WTC11 (cell line): ENCODE measurements at regions of chr12 and their contacts with region 1.

Region 1: DNA sequence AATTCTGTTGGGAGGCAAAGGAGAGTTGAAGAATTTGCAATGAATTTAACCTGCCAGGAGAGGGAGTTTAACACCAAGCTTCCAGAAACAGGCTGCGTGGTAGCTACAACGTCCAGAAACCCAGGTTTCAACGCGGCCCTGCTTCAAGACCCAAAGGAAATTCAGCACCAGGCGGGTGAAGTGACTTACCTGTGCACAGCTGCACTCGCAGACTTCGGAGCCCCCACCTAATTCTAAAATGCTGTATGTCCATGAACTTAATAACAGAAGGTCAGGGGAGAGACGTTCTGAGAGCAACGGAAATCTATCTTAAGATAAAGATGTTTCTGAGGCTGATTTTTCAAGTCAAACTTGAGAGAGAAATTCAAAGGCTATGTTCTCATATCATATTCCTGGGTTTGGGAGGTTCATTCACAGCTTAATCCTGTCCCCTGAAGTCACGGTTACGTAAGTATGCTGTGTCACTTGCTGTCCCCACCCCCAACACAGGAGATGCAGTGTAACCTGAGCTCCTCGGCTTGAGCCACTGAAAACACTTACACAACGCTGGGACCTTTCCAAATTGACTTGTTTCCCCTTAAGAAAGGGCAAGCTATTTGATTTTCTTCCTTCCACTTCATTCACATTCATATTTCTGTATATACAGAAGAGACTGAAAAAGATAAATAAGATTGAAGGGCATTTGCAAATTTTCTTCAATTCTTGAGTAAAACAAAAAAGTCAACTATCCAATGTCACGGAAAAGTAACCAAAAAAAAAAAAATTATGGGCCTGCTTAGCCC is 22.7 kb downstream of the CLIP1 start:
- DNase-seq: peak; percentile 56
- ATAC-seq: peak; percentile 85
- H3K4me3 Mint-ChIP-seq: peak overlapping the region; percentile 68
- H3K27ac Mint-ChIP-seq: peak overlapping the region; percentile 91
- H3K4me1 Mint-ChIP-seq: peaks cover 17% of the 10 kb centered on the region
- H3K27me3 Mint-ChIP-seq: no peaks in the 10 kb centered on the region
- CTCF ChIP-seq: no peak

Region 2: DNA sequence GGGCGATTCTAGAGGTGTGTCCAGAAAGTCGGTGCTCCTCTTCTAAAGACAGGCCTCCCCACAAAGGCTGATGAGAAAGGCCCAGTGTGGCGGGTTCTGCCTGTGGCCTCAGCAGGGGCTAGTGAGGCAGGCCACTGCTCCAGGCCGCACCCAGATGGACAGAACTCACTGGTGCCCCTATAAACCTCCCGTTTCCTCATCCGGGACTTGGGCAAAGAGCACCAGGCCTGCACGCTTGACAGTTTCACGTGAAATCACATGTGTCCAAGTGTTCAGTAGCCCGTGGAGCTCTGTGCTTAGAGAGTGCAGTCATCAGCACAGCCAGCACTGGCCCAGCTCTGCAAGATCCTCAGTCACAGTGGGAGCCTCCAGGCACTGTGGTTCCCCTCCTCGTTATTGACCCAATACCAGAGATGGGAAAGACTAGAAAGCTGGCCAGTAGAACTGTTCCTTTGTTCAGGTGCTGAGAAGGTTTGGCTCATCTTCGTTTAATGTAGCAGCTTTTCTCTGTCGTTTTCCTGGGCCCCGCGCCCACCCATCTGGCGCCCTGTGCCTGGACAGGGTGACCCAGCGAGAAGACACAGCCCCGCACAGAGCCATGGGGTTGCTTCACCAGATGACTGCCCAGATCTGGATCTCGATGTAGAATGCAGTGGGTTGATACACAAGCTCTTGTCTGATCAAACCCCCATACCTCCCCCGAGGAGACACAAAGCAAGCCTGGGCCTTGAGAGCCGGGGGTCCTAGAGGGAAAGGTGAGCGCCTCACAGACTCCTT is 252.1 kb before region 1 on chr12:
- CTCF ChIA-PET with region 1: no interaction called
- POLR2A ChIA-PET with region 1: no interaction called
- DNase-seq: no peak
- ATAC-seq: no peak
- H3K4me3 Mint-ChIP-seq: no peak overlapping the region
- H3K27ac Mint-ChIP-seq: peak overlapping the region; percentile 28; the same call in 1 of the 2 replicates
- H3K4me1 Mint-ChIP-seq: peaks cover 2% of the 10 kb centered on the region; the same call in 1 of the 2 replicates
- H3K27me3 Mint-ChIP-seq: no peaks in the 10 kb centered on the region; the same call in 1 of the 2 replicates
- CTCF ChIP-seq: no peak

Region 3: DNA sequence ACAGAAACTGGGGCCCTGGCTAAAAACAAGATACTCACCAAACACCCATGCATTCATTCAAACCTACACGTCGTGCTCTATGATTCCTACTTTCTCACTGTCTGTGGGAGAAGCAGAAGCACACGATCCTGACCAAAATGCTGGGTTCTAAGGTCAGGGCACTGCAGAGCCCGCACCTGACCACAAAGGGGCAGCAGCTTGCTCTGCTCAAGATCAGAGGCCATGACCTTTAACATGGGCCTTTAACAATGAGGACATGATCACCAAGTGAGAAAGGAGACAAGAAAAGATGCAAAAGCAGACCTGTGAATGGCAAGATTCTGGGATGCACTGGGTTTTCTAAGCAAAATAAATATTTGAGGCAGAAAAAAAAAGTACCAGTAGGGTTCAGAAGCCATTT is 93.4 kb before region 1 on chr12:
- CTCF ChIA-PET with region 1: interaction called, 10 read pairs
- POLR2A ChIA-PET with region 1: no interaction called
- DNase-seq: peak; percentile 44
- ATAC-seq: peak; percentile 98
- H3K4me3 Mint-ChIP-seq: no peak overlapping the region
- H3K27ac Mint-ChIP-seq: peak overlapping the region; percentile 4; the same call in 1 of the 2 replicates
- H3K4me1 Mint-ChIP-seq: no peaks in the 10 kb centered on the region
- H3K27me3 Mint-ChIP-seq: no peaks in the 10 kb centered on the region
- CTCF ChIP-seq: no peak; the same call in 1 of the 2 replicates

Region 4: DNA sequence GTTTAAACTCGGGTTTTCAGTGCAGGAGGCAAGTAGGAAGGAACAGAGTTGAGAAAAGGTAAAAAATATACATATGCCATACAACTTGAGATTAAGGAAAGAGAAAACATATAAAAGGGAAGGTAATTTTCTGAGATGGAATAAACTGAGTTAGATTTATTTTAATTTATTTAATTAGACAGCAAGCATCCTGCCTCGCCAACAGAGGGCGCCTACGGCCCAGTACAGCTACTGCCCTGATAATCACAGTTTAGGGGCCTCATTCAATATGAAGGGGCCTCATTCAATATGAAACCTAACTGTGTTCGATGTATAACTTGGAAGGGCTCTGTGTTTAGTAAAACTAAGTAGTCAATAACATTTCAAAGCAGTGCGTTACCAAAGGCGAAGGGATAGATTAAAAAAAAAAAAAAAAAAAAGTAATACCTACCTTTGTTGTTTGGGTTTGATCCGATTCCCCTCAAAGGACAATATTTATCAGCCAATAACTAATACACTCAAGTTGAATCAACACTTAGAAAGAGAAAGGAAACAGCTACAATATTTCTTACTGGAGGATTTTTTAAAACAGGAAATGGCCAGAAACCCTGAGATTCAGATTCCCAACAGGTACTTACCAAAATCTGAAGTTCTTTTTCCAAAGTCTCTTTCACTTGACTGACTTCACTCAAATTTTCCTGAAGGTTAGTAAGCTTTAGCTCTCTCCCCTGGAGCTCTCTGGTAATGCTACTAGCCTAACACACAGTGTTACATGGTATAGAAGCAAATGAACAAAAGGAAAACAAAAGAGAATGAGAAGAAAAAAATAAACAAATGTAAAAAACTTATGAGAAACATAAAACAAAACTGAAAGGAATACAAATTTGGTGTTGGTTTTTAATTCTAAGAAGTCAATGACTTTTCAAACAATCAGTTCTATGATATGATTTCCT is 63.5 kb before region 1 on chr12:
- CTCF ChIA-PET with region 1: interaction called, 10 read pairs
- POLR2A ChIA-PET with region 1: no interaction called
- DNase-seq: peak; percentile 54
- ATAC-seq: peak; percentile 53; the same call in 1 of the 2 replicates
- H3K4me3 Mint-ChIP-seq: no peak overlapping the region
- H3K27ac Mint-ChIP-seq: peak overlapping the region; percentile 73; the same call in 1 of the 2 replicates
- H3K4me1 Mint-ChIP-seq: no peaks in the 10 kb centered on the region
- H3K27me3 Mint-ChIP-seq: no peaks in the 10 kb centered on the region
- CTCF ChIP-seq: peak; percentile 75

Region 5: DNA sequence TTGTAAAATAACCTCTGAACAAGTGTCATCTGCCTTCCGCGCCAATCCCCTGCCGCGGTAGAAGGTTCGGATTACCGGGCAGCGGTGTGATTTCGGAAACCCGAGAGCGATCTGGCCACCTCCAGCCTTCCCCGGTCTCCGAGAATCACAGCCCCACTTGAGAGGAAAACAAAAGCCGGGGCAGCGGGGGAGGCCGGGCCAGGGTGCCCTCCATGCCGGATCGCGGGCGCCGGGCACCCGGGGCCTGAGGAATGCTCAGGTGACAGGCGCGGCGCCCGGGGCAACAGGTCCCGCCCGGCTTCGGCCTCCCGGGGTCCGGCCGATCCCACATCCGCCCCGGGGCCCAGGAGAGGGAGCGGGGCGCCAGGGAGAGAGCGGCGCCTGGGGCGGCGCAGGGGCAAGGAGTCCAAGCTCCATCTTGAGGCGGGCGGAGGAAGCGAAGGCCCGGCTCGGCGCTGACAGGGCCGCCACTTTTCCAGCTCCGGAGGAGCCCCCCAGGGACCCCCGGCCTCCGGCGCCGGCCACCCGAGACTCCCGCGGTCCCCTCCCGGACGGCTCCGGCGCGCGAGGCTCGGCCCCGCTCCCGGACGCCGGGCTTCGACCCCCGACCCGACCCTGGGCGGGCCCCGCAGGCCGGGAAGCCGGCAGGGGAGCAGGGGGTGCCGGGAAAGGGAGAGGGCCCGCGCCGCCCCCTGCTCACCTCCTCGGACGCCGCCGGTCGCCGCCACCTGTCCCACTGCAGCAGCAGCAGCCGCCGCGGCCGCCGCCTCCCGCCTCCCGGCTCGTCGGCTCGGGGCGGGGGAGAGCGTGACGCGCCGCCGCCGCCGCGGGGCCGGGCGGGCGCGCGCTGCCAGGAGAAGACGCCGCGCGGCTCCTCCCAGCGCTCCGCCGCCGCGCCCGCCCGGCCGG is 22.3 kb after region 1 on chr12 and contains the start of gene CLIP1:
- CTCF ChIA-PET with region 1: interaction called, 31 read pairs
- POLR2A ChIA-PET with region 1: interaction called, 10 read pairs
- DNase-seq: peak; percentile 70
- ATAC-seq: peak; percentile 75
- H3K4me3 Mint-ChIP-seq: peak within 1 kb of the TSS; percentile 86
- H3K27ac Mint-ChIP-seq: peak within 1 kb of the TSS; percentile 94
- H3K4me1 Mint-ChIP-seq: peaks cover 19% of the 10 kb centered on the region
- H3K27me3 Mint-ChIP-seq: peaks cover 5% of the 10 kb centered on the region
- CTCF ChIP-seq: no peak
- total RNA-seq, gene CLIP1: 21.3 to 24.9 TPM (median 21.5 TPM) in 3 replicates

Region 6: DNA sequence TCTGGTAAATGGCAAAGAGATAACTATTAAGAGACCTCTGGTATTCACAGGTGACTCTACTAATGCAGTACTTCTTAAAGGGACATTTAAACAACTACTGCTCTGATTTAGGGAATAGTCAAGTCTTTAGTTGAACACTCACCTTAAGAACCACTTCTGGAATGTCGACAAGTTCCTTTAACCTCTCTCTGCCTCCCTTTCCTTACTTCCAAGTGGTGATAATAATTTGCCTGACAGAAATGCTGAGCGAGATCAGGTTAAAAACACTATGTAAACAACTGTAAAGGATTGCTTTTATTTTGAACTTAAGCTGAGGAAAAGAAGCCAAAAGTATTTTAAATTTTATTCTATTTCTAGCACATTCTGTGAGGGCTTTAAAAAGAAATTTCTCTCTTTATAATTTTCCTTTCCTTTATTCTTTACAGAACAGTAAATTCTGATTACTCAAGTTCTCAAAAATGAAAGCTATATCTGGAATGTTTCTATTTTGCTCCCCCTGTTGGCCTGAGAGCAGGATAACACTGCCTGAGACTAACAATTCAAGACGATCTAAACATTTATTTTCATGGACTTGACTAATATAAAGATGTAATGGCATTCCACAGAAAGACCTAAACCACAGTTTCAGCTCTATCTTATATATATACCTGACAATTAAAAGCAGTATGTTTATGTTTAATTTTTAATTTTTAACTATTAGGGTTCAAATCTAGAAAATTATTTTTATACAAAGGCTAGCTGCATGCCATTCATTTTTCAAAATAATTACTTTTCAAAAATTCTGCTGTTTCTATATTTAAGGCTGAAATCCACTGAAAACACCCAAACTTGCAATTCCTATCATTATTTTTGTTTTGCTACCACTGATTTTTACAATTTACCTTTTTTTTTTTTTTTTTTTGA is 71.8 kb after region 1 on chr12:
- CTCF ChIA-PET with region 1: interaction called, 126 read pairs
- POLR2A ChIA-PET with region 1: interaction called, 9 read pairs
- DNase-seq: no peak
- ATAC-seq: no peak
- H3K4me3 Mint-ChIP-seq: no peak overlapping the region
- H3K27ac Mint-ChIP-seq: peak overlapping the region; percentile 28; the same call in 1 of the 2 replicates
- H3K4me1 Mint-ChIP-seq: no peaks in the 10 kb centered on the region
- H3K27me3 Mint-ChIP-seq: no peaks in the 10 kb centered on the region
- CTCF ChIP-seq: peak; percentile 46

Region 7: DNA sequence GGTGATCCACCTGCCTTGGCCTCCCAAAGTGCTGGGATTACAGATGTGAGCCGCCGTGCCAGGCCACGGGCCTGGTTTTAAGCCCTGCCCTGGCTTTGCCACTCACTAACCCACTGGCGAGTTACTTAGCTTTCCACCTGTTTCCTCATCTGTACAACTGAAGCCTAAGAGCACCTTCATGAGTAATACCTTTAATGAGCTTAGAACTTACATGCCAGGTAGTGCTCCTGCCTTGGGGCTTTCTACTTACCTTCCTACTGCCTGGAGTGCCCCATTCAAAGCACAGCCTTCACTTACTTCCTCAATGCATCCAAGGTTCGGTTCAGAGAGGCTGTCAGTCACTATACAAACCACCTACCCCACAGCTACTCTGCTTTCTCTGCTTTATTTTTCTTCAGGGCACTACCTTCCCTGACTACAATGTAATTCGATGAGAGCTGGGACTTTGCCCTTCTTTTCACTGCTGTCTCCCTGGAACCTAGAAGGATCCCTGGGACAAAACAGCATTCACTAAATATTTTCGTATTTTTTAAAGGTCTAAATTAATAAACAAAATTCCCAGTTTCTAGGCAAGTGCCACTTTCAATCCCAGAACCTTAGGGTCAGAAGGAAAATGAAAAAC is 87.1 kb after region 1 on chr12:
- CTCF ChIA-PET with region 1: no interaction called
- POLR2A ChIA-PET with region 1: no interaction called
- DNase-seq: no peak
- ATAC-seq: no peak
- H3K4me3 Mint-ChIP-seq: no peak overlapping the region
- H3K27ac Mint-ChIP-seq: no peak overlapping the region
- H3K4me1 Mint-ChIP-seq: no peaks in the 10 kb centered on the region
- H3K27me3 Mint-ChIP-seq: no peaks in the 10 kb centered on the region
- CTCF ChIP-seq: no peak

Region 8: GRCh38 chr12:122500685-122501488 is 101.1 kb after region 1 on chr12 and contains the start of gene ZCCHC8:
- CTCF ChIA-PET with region 1: interaction called, 18 read pairs
- POLR2A ChIA-PET with region 1: interaction called, 19 read pairs
- DNase-seq: peak; percentile 98
- ATAC-seq: peak; percentile 94
- H3K4me3 Mint-ChIP-seq: peak within 1 kb of the TSS; percentile 88
- H3K27ac Mint-ChIP-seq: peak within 1 kb of the TSS; percentile 99
- H3K4me1 Mint-ChIP-seq: peaks cover 20% of the 10 kb centered on the region
- H3K27me3 Mint-ChIP-seq: no peaks in the 10 kb centered on the region
- CTCF ChIP-seq: no peak
- total RNA-seq, gene ZCCHC8: 24.3 to 28.4 TPM (median 25.7 TPM) in 3 replicates

Region 9: DNA sequence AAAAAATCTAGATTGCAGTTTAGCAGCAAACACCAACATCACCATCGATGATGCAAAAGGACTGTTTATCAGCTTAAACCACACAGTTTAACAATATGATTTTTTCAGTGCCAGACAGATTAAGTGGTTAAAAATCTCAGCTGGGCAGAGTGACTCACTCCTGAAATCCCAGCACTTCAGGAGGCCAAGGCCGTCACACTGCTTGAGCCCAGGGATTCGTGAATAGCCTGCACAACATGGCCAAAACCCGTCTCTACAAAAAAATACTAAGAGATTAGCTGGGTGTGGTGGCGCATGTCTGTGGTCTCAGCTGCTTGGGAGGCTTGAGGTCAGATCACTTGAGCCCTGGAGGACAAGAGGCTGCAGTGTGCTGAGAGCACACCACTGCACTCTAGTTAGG is 118.1 kb after region 1 on chr12:
- CTCF ChIA-PET with region 1: no interaction called
- POLR2A ChIA-PET with region 1: no interaction called
- DNase-seq: no peak
- ATAC-seq: no peak
- H3K4me3 Mint-ChIP-seq: no peak overlapping the region
- H3K27ac Mint-ChIP-seq: peak overlapping the region; percentile 53; the same call in 1 of the 2 replicates
- H3K4me1 Mint-ChIP-seq: no peaks in the 10 kb centered on the region
- H3K27me3 Mint-ChIP-seq: no peaks in the 10 kb centered on the region
- CTCF ChIP-seq: no peak